CD8-positive, alpha-beta memory T cell (primary cell): ENCODE measurements at regions of chr11 and their contacts with region 1.

Region 1: GRCh38 chr11:6612213-6613041 is at the start of gene TAF10:
- DNase-seq: peak; percentile 94 to 97 (median 95)
- H3K4me3 ChIP-seq: peak within 1 kb of the TSS; percentile 93
- H3K4me3 Mint-ChIP-seq: peak within 1 kb of the TSS in 6 of 7 donors; percentile 89 to 95 (median 90)
- H3K27ac ChIP-seq: peak within 1 kb of the TSS; percentile 98
- H3K27ac Mint-ChIP-seq: peak within 1 kb of the TSS in 7 of 8 donors; percentile 93 to 99 (median 97)
- H3K4me1 ChIP-seq: peaks cover 42% of the 10 kb centered on the region
- H3K4me1 Mint-ChIP-seq: peaks cover 37 to 43% (median 41%) of the 10 kb centered on the region in 3 donors
- H3K27me3 ChIP-seq: no peaks in the 10 kb centered on the region
- H3K27me3 Mint-ChIP-seq: no peaks in the 10 kb centered on the region
- total RNA-seq, gene TAF10: 173 to 175 TPM

Region 2: GRCh38 chr11:6124245-6124644 is 488.2 kb before region 1 on chr11:
- CTCF ChIA-PET with region 1: no interaction called
- POLR2A ChIA-PET with region 1: no interaction called
- DNase-seq: no peak
- H3K4me3 ChIP-seq: no peak overlapping the region
- H3K4me3 Mint-ChIP-seq: no peak overlapping the region
- H3K27ac ChIP-seq: no peak overlapping the region
- H3K27ac Mint-ChIP-seq: no peak overlapping the region
- H3K4me1 ChIP-seq: no peaks in the 10 kb centered on the region
- H3K4me1 Mint-ChIP-seq: no peaks in the 10 kb centered on the region
- H3K27me3 ChIP-seq: no peaks in the 10 kb centered on the region
- H3K27me3 Mint-ChIP-seq: peaks cover 4 to 6% of the 10 kb centered on the region in 2 donors

Region 3: GRCh38 chr11:6481012-6481923 is 131.2 kb before region 1 on chr11 and contains the starts of genes ARFIP2 and TIMM10B:
- CTCF ChIA-PET with region 1: interaction called, 4 read pairs
- POLR2A ChIA-PET with region 1: interaction called, 12 read pairs
- DNase-seq: peak; percentile 93 to 97 (median 94)
- H3K4me3 ChIP-seq: peak within 1 kb of the TSS; percentile 72
- H3K4me3 Mint-ChIP-seq: peak within 1 kb of the TSS; percentile 92 to 99 (median 97)
- H3K27ac ChIP-seq: peak within 1 kb of the TSS; percentile 94
- H3K27ac Mint-ChIP-seq: peak within 1 kb of the TSS; percentile 96 to 99 (median 98)
- H3K4me1 ChIP-seq: peaks cover 28% of the 10 kb centered on the region
- H3K4me1 Mint-ChIP-seq: peaks cover 35 to 47% (median 44%) of the 10 kb centered on the region in 3 donors
- H3K27me3 ChIP-seq: no peaks in the 10 kb centered on the region
- H3K27me3 Mint-ChIP-seq: no peaks in the 10 kb centered on the region
- total RNA-seq, gene ARFIP2: 46.9 to 47.5 TPM
- total RNA-seq, gene TIMM10B: 43.6 to 46.3 TPM

Region 4: DNA sequence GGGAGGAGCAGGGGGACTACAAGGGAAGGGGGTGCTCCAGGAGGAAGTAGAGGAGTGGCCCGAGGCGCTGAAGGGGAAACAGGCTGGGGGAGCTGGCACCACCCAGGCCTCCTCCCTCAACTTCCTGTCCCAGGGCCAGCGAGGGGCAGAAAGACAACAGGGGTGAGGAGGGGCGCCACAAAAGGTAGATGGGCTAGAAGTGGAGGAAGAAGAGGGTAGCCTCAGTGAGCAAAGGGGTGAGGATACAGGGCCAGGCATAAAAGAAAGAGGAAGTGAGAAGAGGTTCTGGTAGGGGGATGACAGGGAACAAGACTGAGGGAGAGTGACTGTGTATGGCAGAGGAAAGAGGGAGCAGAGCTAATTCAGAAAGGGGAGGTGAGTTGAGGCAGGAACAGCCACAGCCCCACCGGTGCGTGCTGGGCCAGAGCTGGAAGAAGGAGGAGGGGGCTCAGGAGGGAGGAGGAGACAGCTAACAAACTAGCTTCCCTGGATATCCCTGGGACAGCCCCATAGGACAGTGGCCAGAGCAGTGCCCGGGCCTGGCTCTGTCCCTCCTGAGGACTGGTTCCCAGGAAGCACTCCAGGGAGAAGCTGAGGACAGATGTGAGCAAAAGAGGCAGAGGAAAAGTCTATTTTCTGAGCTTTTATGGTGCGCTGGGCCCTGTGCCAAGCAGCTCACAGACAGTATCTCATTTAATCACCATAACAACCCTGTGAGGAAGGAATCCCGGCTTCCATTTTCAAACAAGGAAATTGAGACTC is 34.7 kb after region 1 on chr11:
- CTCF ChIA-PET with region 1: interaction called, 3 read pairs
- POLR2A ChIA-PET with region 1: interaction called, 10 read pairs
- DNase-seq: peak in 3 of 5 donors; percentile 22 to 64 (median 41)
- H3K4me3 ChIP-seq: peak overlapping the region; percentile 40
- H3K4me3 Mint-ChIP-seq: no peak overlapping the region
- H3K27ac ChIP-seq: no peak overlapping the region
- H3K27ac Mint-ChIP-seq: no peak overlapping the region
- H3K4me1 ChIP-seq: peaks cover 65% of the 10 kb centered on the region
- H3K4me1 Mint-ChIP-seq: no peaks in the 10 kb centered on the region
- H3K27me3 ChIP-seq: no peaks in the 10 kb centered on the region
- H3K27me3 Mint-ChIP-seq: peaks cover 0 to 1% of the 10 kb centered on the region in 2 donors